Activated CD8-positive, alpha-beta T cell treated with anti-CD3 and anti-CD28 coated beads, Interleukin-2, amount 10 ng/mL, durations not matched to agents 7 days and 5 days (primary cell): ENCODE measurements at regions of chr12 and their contacts with region 1.

Region 1: DNA sequence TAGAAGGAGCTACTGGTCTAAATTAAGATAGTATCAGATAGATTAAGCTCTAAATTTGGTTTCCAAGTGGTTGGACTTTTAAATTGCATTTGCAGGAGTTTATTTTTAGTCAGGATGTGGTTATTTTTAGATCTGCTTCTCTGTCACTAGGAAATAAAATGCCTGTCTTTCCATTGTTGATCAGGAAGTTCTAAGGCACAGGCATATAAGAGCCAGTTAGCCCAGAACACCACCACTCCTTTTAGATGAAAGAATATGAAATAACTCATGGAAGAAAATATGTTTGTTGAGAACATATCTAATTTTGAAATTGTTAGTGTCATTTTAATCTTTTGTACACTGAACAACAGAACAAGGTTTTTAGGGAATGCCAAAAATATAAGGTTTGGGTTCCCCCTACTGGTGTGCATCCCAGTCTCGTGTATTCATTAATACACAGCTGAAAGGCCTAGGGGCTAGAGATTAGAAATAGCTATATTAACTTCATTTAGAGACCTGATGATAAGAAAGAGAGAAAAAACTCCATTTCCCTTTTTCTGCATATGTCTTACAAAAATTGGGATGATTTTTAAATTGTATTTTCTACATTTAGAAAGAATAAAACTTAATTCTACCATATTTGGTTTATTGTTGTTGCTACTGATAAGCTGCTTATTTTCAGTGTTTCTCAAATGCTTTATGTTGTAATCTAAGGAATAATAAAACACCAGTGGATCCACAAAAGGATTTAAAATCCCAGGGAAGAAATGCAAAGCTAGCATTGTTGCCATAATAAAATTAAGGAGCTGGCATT is 67.2 kb downstream of the RIC8B start:
- DNase-seq: peak; percentile 41
- ATAC-seq: no peak
- H3K4me3 Mint-ChIP-seq: no peak overlapping the region
- H3K27ac Mint-ChIP-seq: no peak overlapping the region
- H3K4me1 Mint-ChIP-seq: peaks cover 17% of the 10 kb centered on the region
- H3K27me3 Mint-ChIP-seq: no peaks in the 10 kb centered on the region

Region 2: DNA sequence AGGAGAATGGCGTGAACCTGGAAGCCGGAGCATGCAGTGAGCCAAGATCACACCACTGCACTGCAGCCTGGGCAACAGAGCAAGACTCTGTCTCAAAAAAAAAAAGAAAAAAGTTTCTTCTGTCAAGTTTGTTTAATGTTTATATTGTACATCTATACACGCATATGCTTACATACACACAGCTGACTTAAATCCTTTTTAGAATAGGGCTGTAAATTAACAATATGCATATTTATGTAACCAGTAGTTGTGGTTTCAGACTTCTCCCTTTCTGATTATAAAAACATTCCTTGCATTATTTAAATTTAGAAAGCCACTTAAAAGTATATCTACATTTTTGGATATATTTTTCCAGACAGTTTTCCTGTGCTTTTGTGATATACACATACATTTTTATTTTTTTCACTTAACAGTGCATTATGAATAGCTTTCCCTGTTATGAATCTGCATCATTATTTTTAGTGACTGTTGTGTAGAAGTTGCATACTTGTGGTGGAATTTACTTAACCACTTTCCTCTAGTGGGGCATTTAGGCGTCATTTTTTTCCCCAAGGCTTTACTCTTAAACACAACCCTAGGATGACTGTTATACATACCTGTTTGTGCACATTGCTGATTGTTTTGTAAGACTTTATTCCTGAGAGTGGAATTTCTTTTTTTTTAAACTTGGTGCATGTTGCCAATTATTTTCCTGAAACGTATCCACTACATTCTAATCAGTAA is 454.7 kb before region 1 on chr12:
- CTCF ChIA-PET with region 1: interaction called, 13 read pairs
- POLR2A ChIA-PET with region 1: no interaction called
- DNase-seq: no peak
- ATAC-seq: no peak
- H3K4me3 Mint-ChIP-seq: no peak overlapping the region
- H3K27ac Mint-ChIP-seq: no peak overlapping the region
- H3K4me1 Mint-ChIP-seq: peaks cover 5% of the 10 kb centered on the region
- H3K27me3 Mint-ChIP-seq: no peaks in the 10 kb centered on the region

Region 3: GRCh38 chr12:106709068-106709511 is 132.6 kb before region 1 on chr12:
- CTCF ChIA-PET with region 1: no interaction called
- POLR2A ChIA-PET with region 1: no interaction called
- DNase-seq: no peak
- ATAC-seq: no peak
- H3K4me3 Mint-ChIP-seq: no peak overlapping the region
- H3K27ac Mint-ChIP-seq: no peak overlapping the region
- H3K4me1 Mint-ChIP-seq: no peaks in the 10 kb centered on the region
- H3K27me3 Mint-ChIP-seq: peaks cover 13% of the 10 kb centered on the region

Region 4: DNA sequence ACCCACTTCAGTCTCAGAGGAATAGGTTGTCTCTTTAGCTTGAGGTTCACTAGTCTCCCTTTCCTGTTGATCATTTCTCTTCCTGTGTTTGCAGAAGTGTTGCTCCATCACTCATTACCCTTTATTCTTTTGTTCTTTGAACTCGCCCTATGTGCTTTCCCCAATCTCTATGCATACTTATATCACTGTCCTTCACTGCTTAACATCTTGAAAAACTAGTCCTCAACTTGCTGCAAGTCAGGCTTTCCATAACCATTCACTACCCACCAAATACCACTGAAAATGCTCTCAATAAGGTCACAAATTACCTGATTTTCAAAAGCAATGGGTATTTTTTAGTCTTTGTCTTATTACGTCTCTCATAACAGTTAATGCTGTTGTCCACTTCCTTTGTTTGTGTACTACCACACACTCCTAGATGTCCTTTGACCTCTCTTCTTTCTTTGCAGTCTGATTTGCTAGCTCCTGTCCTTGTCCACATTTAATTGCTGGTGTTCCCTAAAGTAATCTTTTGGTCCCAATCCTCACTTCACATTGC is 13.6 kb after region 1 on chr12:
- CTCF ChIA-PET with region 1: interaction called, 14 read pairs
- POLR2A ChIA-PET with region 1: no interaction called
- DNase-seq: no peak
- ATAC-seq: no peak
- H3K4me3 Mint-ChIP-seq: no peak overlapping the region
- H3K27ac Mint-ChIP-seq: no peak overlapping the region
- H3K4me1 Mint-ChIP-seq: peaks cover 6% of the 10 kb centered on the region
- H3K27me3 Mint-ChIP-seq: no peaks in the 10 kb centered on the region

Region 5: GRCh38 chr12:106883426-106883825 is 41.7 kb after region 1 on chr12:
- CTCF ChIA-PET with region 1: no interaction called
- POLR2A ChIA-PET with region 1: no interaction called
- DNase-seq: no peak
- ATAC-seq: no peak
- H3K4me3 Mint-ChIP-seq: no peak overlapping the region
- H3K27ac Mint-ChIP-seq: no peak overlapping the region
- H3K4me1 Mint-ChIP-seq: no peaks in the 10 kb centered on the region
- H3K27me3 Mint-ChIP-seq: no peaks in the 10 kb centered on the region